Activated T-helper 1 cell treated with anti-CD3 and anti-CD28 coated beads, Interleukin-12 subunit alpha, Interleukin-12 subunit beta, Interleukin-2, Interleukin-4 antibody, amounts not matched to agents 30 ng/mL and 10 ng/mL and 1 ng/mL, durations not matched to agents 14 hours and 24 hours and 36 hours (primary cell): ENCODE measurements at regions of chr20 and their contacts with region 1.

Region 1: GRCh38 chr20:1671891-1672669 is 14.5 kb upstream of the SIRPG start:
- DNase-seq: no peak
- H3K4me3 Mint-ChIP-seq: peak overlapping the region; percentile 76
- H3K27ac Mint-ChIP-seq: peak overlapping the region; percentile 93
- H3K4me1 Mint-ChIP-seq: peaks cover 95% of the 10 kb centered on the region
- H3K27me3 Mint-ChIP-seq: no peaks in the 10 kb centered on the region

Region 2: GRCh38 chr20:1623501-1624265 is 48.4 kb before region 1 on chr20:
- intact Hi-C with region 1: loop called (anchors 1 kb)
- DNase-seq: no peak
- H3K4me3 Mint-ChIP-seq: no peak overlapping the region
- H3K27ac Mint-ChIP-seq: peak overlapping the region; percentile 36
- H3K4me1 Mint-ChIP-seq: peaks cover 87% of the 10 kb centered on the region
- H3K27me3 Mint-ChIP-seq: no peaks in the 10 kb centered on the region

Region 3: DNA sequence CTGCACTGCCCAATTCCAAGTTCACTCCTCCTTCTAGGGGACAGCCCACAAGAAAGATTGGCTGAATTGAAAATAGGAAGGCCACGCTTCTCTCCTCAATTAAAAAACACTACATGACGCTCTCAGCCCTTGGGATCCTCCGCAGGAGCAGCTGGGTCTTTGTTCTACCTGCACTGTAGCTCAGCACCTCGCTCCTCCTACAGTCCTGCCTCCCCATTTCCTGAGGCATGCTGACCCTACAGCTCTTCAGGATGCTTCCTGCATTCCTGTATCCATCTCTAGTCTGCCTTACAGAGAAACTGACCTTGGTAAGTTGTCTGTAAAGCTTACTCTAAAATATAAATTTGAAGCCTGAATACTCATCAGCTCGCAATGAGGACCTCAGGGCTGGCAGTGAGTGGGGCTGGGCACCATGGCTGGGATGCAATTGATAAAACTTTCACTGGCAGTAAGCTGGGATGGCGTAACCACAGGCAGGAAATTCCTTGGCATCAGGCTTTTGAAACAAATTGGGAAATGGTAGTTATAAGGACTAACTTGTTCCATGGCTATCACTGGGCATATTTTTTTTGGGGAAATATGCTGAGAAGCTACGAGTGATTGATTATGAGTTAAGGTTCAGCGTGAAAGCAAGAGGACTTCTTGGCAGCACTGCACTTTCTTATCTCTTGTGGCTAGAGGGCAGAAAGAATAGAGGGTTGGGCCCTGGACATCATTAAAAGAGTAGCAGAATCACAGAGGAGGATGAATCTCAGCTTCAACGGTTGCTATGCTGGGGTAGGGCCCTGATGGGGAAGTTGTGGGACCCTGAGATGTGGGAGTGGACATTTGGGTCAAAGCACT is 40.5 kb before region 1 on chr20:
- intact Hi-C with region 1: loop called (anchors 2 kb)
- DNase-seq: no peak
- H3K4me3 Mint-ChIP-seq: no peak overlapping the region
- H3K27ac Mint-ChIP-seq: peak overlapping the region; percentile 76
- H3K4me1 Mint-ChIP-seq: peaks cover 47% of the 10 kb centered on the region
- H3K27me3 Mint-ChIP-seq: no peaks in the 10 kb centered on the region